Esophagus muscularis mucosa (tissue), 4 donors: ENCODE measurements at regions of chrX and their contacts with region 1.

Region 1: DNA sequence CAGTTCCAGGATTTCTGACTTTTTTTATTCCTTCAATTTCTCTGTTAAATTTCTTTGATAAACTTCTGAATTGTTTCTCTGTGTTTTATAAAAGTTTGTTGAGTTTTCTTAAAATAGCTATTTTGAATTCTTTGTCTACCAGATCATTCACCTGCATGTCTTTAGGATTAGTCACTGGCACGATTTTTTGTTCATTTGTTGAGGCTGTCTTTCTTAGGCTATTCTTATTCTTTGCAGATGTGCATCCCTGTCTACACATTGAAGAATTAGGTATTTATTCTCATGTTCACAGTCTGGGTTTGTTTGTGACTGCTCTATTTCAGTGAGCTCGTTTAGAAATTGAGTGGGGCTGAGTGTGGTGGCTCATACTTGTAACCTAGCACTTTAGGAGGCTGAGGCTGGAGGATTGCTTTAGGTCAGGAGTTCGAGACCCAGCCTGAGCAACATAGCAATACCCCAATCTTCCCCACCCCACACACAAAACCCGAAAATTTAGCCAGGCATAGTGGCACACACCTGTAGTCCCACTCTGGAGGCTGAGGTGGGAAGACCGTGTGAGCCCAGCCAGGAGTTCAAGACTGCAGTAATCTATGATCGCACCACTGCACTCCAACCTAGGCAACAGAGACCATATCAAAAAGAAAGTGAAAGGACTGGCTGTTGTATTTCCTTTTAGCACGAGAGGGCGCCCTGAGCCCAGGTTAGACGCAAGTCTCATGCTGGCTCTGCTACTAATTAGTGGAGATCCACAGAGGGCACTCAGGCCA is 42.0 kb downstream of the F8 start:
- DNase-seq: no peak
- H3K4me3 ChIP-seq: peak overlapping the region; percentile 42 to 53 (median 45)
- H3K27ac ChIP-seq: no peak overlapping the region
- H3K4me1 ChIP-seq: peaks cover 0 to 10% (median 7%) of the 10 kb centered on the region in 4 donors
- H3K27me3 ChIP-seq: no peaks in the 10 kb centered on the region
- CTCF ChIP-seq: peak; percentile 62 to 69 (median 68)
- EP300 ChIP-seq: no peak
- POLR2A ChIP-seq: no peak

Region 2: DNA sequence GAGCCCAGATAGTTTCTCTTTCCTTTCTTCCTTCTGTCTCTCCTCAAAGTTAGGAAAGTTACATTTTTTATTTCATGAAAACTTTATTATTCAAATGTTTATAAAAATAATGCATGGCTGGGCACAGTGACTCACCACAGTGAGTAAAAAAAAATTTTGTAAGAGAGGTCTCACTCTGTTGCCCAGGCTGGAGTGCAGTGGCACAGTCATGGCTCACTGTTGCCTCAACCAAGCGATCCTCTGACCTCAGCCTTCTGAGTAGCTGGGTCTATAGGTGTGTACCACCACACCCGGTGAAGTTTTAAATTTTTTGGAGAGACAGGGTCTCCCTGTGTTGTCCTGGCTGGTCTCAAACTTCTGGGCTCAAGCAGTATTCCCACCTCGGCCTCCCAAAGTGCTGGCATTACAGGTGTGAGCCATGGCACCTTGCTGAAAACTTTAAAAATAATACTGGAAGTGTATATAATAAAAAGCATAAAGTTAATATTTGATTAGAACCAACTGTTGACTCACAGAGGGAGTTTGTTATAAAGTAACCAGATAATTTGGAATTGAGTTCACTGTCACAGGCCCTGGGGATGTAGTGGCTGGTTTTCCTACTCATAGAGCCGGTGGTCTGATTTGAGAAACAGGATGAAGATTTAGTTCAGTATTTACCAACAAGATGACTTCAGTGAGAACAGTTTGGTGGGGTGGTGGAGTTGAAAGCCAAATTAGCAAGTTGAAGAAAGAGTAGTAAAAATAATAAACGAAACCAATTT is 72.4 kb after region 1 on chrX:
- intact Hi-C with region 1: loop called (anchors 5 kb)
- DNase-seq: no peak
- H3K4me3 ChIP-seq: no peak overlapping the region
- H3K27ac ChIP-seq: no peak overlapping the region
- H3K4me1 ChIP-seq: peaks cover 11 to 18% (median 15%) of the 10 kb centered on the region in 4 donors
- H3K27me3 ChIP-seq: no peaks in the 10 kb centered on the region
- CTCF ChIP-seq: no peak
- EP300 ChIP-seq: no peak
- POLR2A ChIP-seq: no peak

Region 3: DNA sequence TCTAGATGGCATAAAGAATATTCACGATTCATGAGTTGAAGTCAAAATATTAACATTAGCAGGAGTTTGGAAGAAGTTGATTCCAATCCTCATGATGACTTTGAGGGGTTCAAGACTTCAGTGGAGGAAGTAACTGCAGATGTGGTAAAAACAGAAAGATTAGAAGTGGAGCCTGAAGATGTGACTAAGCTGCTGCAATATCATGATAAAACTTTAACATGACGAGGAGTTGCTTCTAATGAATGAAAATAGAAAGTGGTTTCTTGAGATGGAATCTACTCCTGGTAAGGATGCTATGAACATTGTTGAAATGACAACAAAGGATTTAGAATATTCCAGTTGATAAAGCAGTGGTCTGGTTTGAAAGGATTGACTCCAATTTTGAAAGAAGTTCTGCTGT is 702.3 kb after region 1 on chrX:
- intact Hi-C with region 1: no loop called
- DNase-seq: no peak
- H3K4me3 ChIP-seq: no peak overlapping the region
- H3K27ac ChIP-seq: no peak overlapping the region
- H3K4me1 ChIP-seq: no peaks in the 10 kb centered on the region
- H3K27me3 ChIP-seq: no peaks in the 10 kb centered on the region
- CTCF ChIP-seq: no peak
- EP300 ChIP-seq: no peak
- POLR2A ChIP-seq: no peak